ENCODE measurements at regions of chr2 and their contacts with region 1.

Region 1: GRCh38 chr2:108220942-108221541 is 18.7 kb upstream of the SULT1C3 start:
- DNase-seq: no peak
- ATAC-seq: no peak
- H3K4me3 ChIP-seq: no peak overlapping the region
- H3K27ac ChIP-seq: no peak overlapping the region
- H3K4me1 ChIP-seq: peaks cover 0 to under 1% of the 10 kb centered on the region in 2 donors
- H3K27me3 ChIP-seq: no peaks in the 10 kb centered on the region
- CTCF ChIP-seq: no peak

Region 2: DNA sequence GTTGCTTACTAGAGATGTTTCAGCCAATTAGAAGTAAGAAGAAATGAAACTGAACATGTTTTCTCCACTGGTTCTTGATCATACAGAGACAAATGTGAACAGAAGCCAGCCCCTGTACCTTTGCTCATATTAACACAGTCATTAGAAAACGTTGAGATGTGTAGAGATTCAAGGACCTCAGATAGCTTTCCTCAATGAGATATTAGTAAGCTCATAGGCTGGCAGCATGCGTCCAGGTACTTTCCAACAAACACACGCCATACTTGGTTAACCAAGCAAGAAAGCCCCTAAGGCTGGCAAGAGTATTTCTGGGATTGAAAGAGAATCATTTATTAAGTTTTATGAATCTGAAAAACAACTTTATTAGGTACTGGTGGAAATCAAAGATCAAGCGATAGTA is 197.3 kb before region 1 on chr2:
- intact Hi-C with region 1: no loop called
- DNase-seq: no peak
- ATAC-seq: no peak
- H3K4me3 ChIP-seq: no peak overlapping the region
- H3K27ac ChIP-seq: no peak overlapping the region
- H3K4me1 ChIP-seq: no peaks in the 10 kb centered on the region
- H3K27me3 ChIP-seq: no peaks in the 10 kb centered on the region
- CTCF ChIP-seq: no peak

Region 3: GRCh38 chr2:108315444-108315934 is 94.4 kb after region 1 on chr2:
- intact Hi-C with region 1: no loop called
- DNase-seq: peak in 2 of 4 donors; percentile 52 to 54
- ATAC-seq: peak; percentile 93
- H3K4me3 ChIP-seq: no peak overlapping the region
- H3K27ac ChIP-seq: peak overlapping the region; percentile 2 to 67
- H3K4me1 ChIP-seq: peaks cover 0 to 4% of the 10 kb centered on the region in 2 donors
- H3K27me3 ChIP-seq: no peaks in the 10 kb centered on the region
- CTCF ChIP-seq: no peak

Region 4: DNA sequence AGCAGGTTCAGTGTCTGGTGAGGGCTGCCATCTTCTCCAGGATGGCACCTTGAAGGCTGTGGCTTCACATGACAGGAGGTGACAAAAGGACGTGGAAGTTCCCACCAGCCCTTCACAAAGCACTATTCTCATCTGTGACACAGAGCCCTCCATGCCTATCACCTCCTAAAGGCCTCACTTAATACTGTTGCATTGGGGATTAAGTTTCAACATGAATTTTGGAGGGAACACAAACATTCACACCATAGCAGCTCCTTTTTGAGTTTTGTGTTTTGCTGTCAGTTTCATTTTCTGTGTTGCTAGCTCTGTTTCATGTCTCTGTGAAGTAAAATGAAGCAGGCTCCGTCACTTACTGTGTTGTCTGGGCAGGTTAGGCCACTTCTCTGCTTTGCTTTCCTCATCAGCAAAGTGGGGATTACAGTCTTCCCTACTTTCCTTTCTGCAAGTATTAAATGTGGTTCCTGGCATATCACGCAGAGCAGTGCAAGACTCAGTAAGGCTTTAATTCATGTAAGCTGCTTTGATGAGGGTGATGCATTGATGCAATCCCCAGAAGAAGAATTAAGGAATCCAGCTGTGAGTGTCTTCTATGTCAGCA is 344.8 kb after region 1 on chr2:
- intact Hi-C with region 1: loop called in 1 of 2 experiments (anchors 10 kb)
- DNase-seq: no peak
- ATAC-seq: peak; percentile 44
- H3K4me3 ChIP-seq: no peak overlapping the region
- H3K27ac ChIP-seq: no peak overlapping the region
- H3K4me1 ChIP-seq: peaks cover 0 to 3% of the 10 kb centered on the region in 2 donors
- H3K27me3 ChIP-seq: no peaks in the 10 kb centered on the region
- CTCF ChIP-seq: no peak